ENCODE measurements at regions of chr4 and their contacts with region 1.

Region 1: DNA sequence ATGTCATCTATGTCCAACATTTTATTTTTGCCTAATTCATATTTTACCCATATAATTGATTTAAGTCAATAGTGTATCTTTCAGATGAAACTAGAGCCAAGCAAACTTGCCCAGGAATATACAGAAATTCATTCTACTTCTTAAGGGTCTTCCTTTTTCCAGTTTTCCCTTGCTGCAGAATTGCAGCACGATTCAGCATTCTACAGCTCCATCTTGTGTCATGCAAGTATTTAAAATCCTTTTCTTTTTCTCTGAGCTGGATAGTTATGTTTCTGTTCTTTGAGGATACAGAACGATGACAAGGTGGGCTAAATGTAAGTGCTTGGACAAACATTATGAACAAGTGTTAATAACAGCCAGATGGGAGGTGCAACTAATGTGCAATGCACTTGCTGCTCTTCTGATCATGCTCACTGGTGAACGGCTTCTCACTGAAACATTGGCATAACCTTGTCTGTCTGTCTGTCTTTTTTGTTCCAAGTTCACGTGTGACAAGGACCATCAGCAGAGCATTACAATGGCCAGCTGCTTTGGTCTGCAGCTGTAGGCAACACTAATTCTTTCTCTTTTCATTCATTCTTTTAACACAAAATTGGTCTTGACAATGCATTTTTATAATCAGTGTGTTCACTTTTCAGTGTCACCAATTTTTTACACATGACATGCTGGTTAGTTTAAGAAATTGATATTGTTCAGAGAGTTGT is 1821.7 kb downstream of the ARAP2 start:
- DNase-seq: no peak
- H3K4me3 ChIP-seq: no peak overlapping the region
- H3K27ac ChIP-seq: no peak overlapping the region
- H3K4me1 ChIP-seq: no peaks in the 10 kb centered on the region
- H3K27me3 ChIP-seq: no peaks in the 10 kb centered on the region
- CTCF ChIP-seq: peak; percentile 34; the same call in 1 of the 2 replicates
- EP300 ChIP-seq: no peak
- RAD21 ChIP-seq: peak; percentile 60

Region 2: GRCh38 chr4:33649015-33649414 is 773.6 kb before region 1 on chr4:
- CTCF ChIA-PET with region 1: interaction called, 15 read pairs
- POLR2A ChIA-PET with region 1: no interaction called
- DNase-seq: no peak
- H3K4me3 ChIP-seq: no peak overlapping the region
- H3K27ac ChIP-seq: no peak overlapping the region
- H3K4me1 ChIP-seq: no peaks in the 10 kb centered on the region
- H3K27me3 ChIP-seq: no peaks in the 10 kb centered on the region
- CTCF ChIP-seq: peak; percentile 74
- EP300 ChIP-seq: no peak
- RAD21 ChIP-seq: peak; percentile 79